PC-3 (cell line): ENCODE measurements at regions of chr12 and their contacts with region 1.

Region 1: DNA sequence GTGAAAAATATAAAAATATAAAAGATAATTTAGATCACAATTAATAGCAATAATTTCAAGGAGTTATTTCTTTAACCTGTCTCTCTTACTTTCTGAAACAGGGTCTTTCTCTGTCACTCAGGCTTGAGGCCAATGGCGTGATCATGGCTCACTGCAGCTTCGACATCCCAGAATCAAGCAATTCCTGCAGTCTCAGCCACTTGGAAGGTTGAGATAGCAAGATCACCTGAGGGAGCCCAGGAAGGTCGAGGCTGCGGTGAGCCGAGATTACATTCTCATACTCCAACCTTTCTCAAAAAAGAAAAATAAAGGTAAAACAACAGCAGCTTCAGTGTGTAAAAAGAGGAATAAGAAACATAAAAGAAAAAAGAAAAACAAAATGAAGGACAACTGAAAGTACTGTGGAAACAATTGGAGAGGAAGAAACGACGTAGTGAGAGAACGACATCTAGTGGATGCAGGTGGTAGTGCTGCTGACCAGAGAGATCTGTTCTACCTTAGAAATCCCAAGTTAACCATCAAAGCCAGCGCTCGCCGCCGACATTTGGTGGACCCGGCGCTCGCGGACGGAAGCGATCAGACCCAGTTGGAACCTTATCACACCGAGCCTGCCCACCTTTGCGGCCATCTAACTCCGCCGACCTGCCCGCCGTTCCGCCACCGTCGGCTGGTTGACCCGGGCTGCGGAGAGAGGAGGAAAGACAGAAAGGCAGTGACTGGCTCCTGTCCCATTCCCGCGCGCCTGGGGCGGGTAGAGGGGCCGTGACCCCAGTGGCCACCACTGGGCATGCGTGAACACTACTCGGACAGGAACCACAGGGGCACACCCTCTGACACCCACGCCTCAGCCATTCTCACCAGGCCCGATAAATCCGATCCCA is 196.1 kb downstream of the ALG10 start:
- DNase-seq: peak; percentile 89
- ATAC-seq: peak; percentile 89
- H3K4me3 ChIP-seq: peak overlapping the region; percentile 87
- H3K27ac ChIP-seq: no peak overlapping the region
- H3K4me1 ChIP-seq: no peaks in the 10 kb centered on the region; the same call in 1 of the 2 replicates
- H3K27me3 ChIP-seq: no peaks in the 10 kb centered on the region
- CTCF ChIP-seq: peak; percentile 92

Region 2: GRCh38 chr12:34033628-34034282 is 184.7 kb before region 1 on chr12:
- CTCF ChIA-PET with region 1: no interaction called
- POLR2A ChIA-PET with region 1: no interaction called
- intact Hi-C with region 1: loop called (anchors 1 kb)
- DNase-seq: peak; percentile 59
- ATAC-seq: no peak
- H3K4me3 ChIP-seq: no peak overlapping the region
- H3K27ac ChIP-seq: no peak overlapping the region
- H3K4me1 ChIP-seq: no peaks in the 10 kb centered on the region
- H3K27me3 ChIP-seq: no peaks in the 10 kb centered on the region
- CTCF ChIP-seq: peak; percentile 56

Region 3: GRCh38 chr12:34126239-34126641 is 92.2 kb before region 1 on chr12:
- CTCF ChIA-PET with region 1: no interaction called
- POLR2A ChIA-PET with region 1: no interaction called
- intact Hi-C with region 1: loop called (anchors 1 kb)
- DNase-seq: peak; percentile 16
- ATAC-seq: peak; percentile 64
- H3K4me3 ChIP-seq: peak overlapping the region; percentile 51
- H3K27ac ChIP-seq: no peak overlapping the region
- H3K4me1 ChIP-seq: no peaks in the 10 kb centered on the region; the same call in 1 of the 2 replicates
- H3K27me3 ChIP-seq: no peaks in the 10 kb centered on the region
- CTCF ChIP-seq: no peak

Region 4: GRCh38 chr12:34547276-34547675 is 328.9 kb after region 1 on chr12:
- CTCF ChIA-PET with region 1: no interaction called
- POLR2A ChIA-PET with region 1: no interaction called
- intact Hi-C with region 1: no loop called
- DNase-seq: no peak
- ATAC-seq: no peak
- H3K4me3 ChIP-seq: no peak overlapping the region
- H3K27ac ChIP-seq: no peak overlapping the region
- H3K4me1 ChIP-seq: no peaks in the 10 kb centered on the region
- H3K27me3 ChIP-seq: no peaks in the 10 kb centered on the region
- CTCF ChIP-seq: no peak